ENCODE measurements at regions of chr12 and their contacts with region 1.

Region 1: GRCh38 chr12:26126340-26127284 is 1.8 kb upstream of the BHLHE41 start:
- DNase-seq: peak; percentile 25
- H3K4me3 Mint-ChIP-seq: peak overlapping the region; percentile 79
- H3K27ac Mint-ChIP-seq: no peak overlapping the region
- H3K4me1 Mint-ChIP-seq: peaks cover 23% of the 10 kb centered on the region
- H3K27me3 Mint-ChIP-seq: peaks cover 80% of the 10 kb centered on the region

Region 2: GRCh38 chr12:25958428-25959070 is 168.1 kb before region 1 on chr12 and contains the start of gene RASSF8:
- intact Hi-C with region 1: loop called (anchors 5 kb)
- DNase-seq: peak; percentile 11
- H3K4me3 Mint-ChIP-seq: peak within 1 kb of the TSS; percentile 79
- H3K27ac Mint-ChIP-seq: no peak within 1 kb of the TSS
- H3K4me1 Mint-ChIP-seq: peaks cover 6% of the 10 kb centered on the region
- H3K27me3 Mint-ChIP-seq: peaks cover 64% of the 10 kb centered on the region
- total RNA-seq, gene RASSF8: 0.16 and 0.28 TPM in 2 replicates

Region 3: GRCh38 chr12:26113853-26114719 is 12.5 kb before region 1 on chr12:
- intact Hi-C with region 1: loop called (anchors 1 kb)
- DNase-seq: peak; percentile 46
- H3K4me3 Mint-ChIP-seq: peak overlapping the region; percentile 65
- H3K27ac Mint-ChIP-seq: no peak overlapping the region
- H3K4me1 Mint-ChIP-seq: peaks cover 3% of the 10 kb centered on the region
- H3K27me3 Mint-ChIP-seq: peaks cover 70% of the 10 kb centered on the region

Region 4: DNA sequence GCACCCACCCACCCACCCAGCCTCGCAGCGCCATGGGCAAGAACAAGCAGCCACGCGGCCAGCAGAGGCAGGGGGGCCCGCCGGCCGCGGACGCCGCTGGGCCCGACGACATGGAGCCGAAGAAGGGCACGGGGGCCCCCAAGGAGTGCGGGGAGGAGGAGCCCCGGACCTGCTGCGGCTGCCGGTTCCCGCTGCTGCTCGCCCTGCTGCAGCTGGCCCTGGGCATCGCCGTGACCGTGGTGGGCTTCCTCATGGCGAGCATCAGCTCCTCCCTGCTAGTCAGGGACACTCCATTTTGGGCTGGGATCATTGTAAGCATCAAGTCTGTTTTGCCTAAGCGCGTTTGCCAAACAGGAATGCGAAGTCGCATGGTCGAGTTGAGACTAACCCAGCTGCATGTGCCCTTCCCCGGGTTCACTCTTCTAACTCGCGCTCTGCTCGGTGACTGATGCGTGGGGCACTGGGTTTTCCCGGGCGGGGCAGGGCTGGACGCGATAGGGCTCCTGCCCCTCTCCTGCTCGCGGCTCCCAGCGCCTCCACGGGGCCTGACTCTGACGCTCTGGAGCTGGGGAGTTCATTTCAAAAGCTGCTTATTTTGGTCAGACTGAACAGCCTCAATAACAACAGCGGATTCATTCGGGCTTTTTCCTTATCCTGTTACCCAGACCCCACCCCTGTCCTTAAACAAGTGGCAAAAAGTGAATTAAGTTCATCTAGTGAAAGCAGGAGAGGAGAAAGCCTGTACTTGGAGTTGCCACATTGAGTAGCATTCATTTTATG is 69.2 kb after region 1 on chr12:
- intact Hi-C with region 1: loop called (anchors 5 kb)
- DNase-seq: no peak
- H3K4me3 Mint-ChIP-seq: peak overlapping the region; percentile 63
- H3K27ac Mint-ChIP-seq: no peak overlapping the region
- H3K4me1 Mint-ChIP-seq: peaks cover 1% of the 10 kb centered on the region
- H3K27me3 Mint-ChIP-seq: peaks cover 63% of the 10 kb centered on the region

Region 5: GRCh38 chr12:26274441-26275312 is 148.1 kb after region 1 on chr12:
- intact Hi-C with region 1: loop called (anchors 10 kb)
- DNase-seq: peak; percentile 20
- H3K4me3 Mint-ChIP-seq: no peak overlapping the region
- H3K27ac Mint-ChIP-seq: peak overlapping the region; percentile 60
- H3K4me1 Mint-ChIP-seq: peaks cover 26% of the 10 kb centered on the region
- H3K27me3 Mint-ChIP-seq: peaks cover 23% of the 10 kb centered on the region

Region 6: GRCh38 chr12:26614020-26614616 is 487.5 kb after region 1 on chr12:
- intact Hi-C with region 1: loop called (anchors 5 kb)
- DNase-seq: no peak
- H3K4me3 Mint-ChIP-seq: no peak overlapping the region
- H3K27ac Mint-ChIP-seq: no peak overlapping the region
- H3K4me1 Mint-ChIP-seq: no peaks in the 10 kb centered on the region
- H3K27me3 Mint-ChIP-seq: no peaks in the 10 kb centered on the region

Region 7: GRCh38 chr12:27969624-27970400 is 1843.2 kb after region 1 on chr12:
- intact Hi-C with region 1: loop called (anchors 10 kb)
- DNase-seq: no peak
- H3K4me3 Mint-ChIP-seq: peak overlapping the region; percentile 73
- H3K27ac Mint-ChIP-seq: no peak overlapping the region
- H3K4me1 Mint-ChIP-seq: peaks cover 9% of the 10 kb centered on the region
- H3K27me3 Mint-ChIP-seq: peaks cover 84% of the 10 kb centered on the region